ENCODE measurements at regions of chr15 and their contacts with region 1.

Region 1: GRCh38 chr15:64731012-64731806 is 44.2 kb downstream of the RBPMS2 start:
- DNase-seq: peak; percentile 80 to 95 (median 87)
- H3K4me3 ChIP-seq: no peak overlapping the region
- H3K27ac ChIP-seq: no peak overlapping the region
- H3K4me1 ChIP-seq: peaks cover 0 to 7% of the 10 kb centered on the region in 2 donors
- H3K27me3 ChIP-seq: no peaks in the 10 kb centered on the region
- CTCF ChIP-seq: peak; percentile 83 to 98 (median 95)
- POLR2A ChIP-seq: no peak

Region 2: GRCh38 chr15:64681424-64682024 is 49.7 kb before region 1 on chr15:
- intact Hi-C with region 1: loop called (anchors 2 to 5 kb)
- DNase-seq: peak; percentile 50 to 80 (median 65)
- H3K4me3 ChIP-seq: no peak overlapping the region
- H3K27ac ChIP-seq: no peak overlapping the region
- H3K4me1 ChIP-seq: no peaks in the 10 kb centered on the region
- H3K27me3 ChIP-seq: no peaks in the 10 kb centered on the region
- CTCF ChIP-seq: peak; percentile 60 to 96 (median 86)
- POLR2A ChIP-seq: no peak

Region 3: DNA sequence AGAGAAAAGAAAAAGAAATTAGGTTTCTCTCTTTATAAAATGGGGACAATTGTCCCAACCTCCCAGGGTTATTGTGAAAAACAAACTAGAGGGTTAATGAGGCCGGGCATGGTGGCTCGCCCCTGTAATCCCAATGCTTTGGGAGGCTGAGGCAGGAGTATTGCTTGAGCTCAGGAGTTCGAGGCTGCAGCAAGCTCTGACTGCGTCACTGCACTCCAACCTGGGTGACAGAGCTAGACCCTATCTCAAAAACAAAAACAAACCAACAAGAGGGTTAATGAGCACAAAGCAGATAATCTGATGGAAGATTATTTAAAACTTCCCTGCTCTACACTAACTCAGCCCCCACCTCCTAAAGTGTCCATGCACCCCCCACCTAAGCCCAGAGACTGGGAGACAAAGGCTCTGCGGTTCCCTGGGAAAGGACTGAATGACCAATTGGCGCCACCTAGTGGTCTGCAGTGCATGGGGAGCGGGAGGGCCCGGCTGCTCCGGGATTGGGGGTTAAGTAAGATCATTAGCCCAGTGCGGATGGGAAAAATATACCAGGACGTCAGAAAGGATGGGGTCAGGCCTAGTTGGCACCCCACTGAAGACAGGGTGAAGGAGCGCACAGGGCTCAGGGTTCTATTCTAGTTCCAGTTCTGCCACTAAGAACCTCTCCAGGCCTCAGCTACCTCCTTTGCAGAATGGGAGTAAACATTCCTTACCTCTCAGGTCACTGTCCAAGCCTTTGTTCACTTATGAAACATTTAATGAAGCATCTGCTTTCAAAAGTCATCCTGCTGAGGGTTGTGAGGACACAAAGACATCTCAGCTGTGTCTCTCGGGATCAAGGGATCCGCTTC is 78.7 kb after region 1 on chr15:
- intact Hi-C with region 1: loop called (anchors 2 to 5 kb)
- DNase-seq: peak; percentile 75 to 90 (median 83)
- H3K4me3 ChIP-seq: no peak overlapping the region
- H3K27ac ChIP-seq: no peak overlapping the region
- H3K4me1 ChIP-seq: peaks cover 4 to 6% of the 10 kb centered on the region in 2 donors
- H3K27me3 ChIP-seq: no peaks in the 10 kb centered on the region
- CTCF ChIP-seq: peak; percentile 79 to 93 (median 90)
- POLR2A ChIP-seq: no peak

Region 4: GRCh38 chr15:64841258-64842095 is 110.3 kb after region 1 on chr15 and contains the start of gene PLEKHO2:
- intact Hi-C with region 1: no loop called
- DNase-seq: peak; percentile 97 to 99 (median 97)
- H3K4me3 ChIP-seq: peak within 1 kb of the TSS; percentile 62 to 97 (median 92)
- H3K27ac ChIP-seq: peak within 1 kb of the TSS; percentile 88 to 97 (median 96)
- H3K4me1 ChIP-seq: peaks cover 39 to 44% of the 10 kb centered on the region in 2 donors
- H3K27me3 ChIP-seq: no peaks in the 10 kb centered on the region
- CTCF ChIP-seq: peak in 3 of 6 experiments; percentile 19 to 39 (median 25)
- POLR2A ChIP-seq: peak; percentile 79 to 83
- total RNA-seq, gene PLEKHO2: 11.7 to 62.9 (median 49.5) TPM

Region 5: DNA sequence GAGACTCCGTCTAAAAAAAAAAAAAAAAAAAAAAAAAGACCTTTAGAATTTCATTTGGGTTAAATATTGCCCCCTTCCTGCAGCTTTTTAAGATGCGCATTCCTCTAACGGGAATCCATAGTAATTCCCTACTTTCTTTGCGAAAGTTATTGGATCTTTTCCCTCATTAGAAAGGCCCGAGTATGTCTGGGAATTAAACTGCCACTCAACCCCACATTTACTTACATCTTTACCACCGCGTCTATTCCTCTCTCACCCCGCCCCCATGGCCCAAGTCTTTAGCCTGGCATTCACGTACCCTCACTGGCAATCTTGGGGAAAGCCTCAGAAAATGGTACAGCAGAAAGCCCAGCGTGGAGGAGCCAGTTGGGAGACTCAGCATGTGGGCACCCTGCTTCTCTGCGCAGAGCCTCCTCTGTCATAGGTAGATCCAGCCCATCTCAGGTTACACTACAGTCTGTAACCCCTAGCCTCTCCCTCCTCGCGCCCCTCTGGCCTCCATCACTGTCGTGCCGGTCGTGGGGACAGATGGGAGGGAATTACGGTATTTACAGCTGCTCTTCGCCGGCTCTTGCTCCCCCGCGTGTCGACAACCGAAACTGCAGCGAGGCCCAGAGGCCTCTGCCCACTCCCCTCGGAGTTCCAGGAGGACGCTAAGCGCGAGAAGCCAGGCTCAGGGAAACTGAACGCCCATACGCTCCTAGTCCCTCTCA is 174.1 kb after region 1 on chr15:
- intact Hi-C with region 1: loop called (anchors 5 to 10 kb)
- DNase-seq: peak; percentile 76 to 90 (median 80)
- H3K4me3 ChIP-seq: peak overlapping the region in 1 of 4 donors; percentile 28
- H3K27ac ChIP-seq: peak overlapping the region in 1 of 5 donors; percentile 13
- H3K4me1 ChIP-seq: peaks cover 0 to 9% of the 10 kb centered on the region in 2 donors
- H3K27me3 ChIP-seq: no peaks in the 10 kb centered on the region
- CTCF ChIP-seq: peak; percentile 70 to 88 (median 82)
- POLR2A ChIP-seq: no peak

Region 6: GRCh38 chr15:64911311-64912191 is 180.3 kb after region 1 on chr15 and contains the start of gene ANKDD1A:
- intact Hi-C with region 1: loop called (anchors 5 to 10 kb)
- DNase-seq: peak; percentile 78 to 89 (median 87)
- H3K4me3 ChIP-seq: peak within 1 kb of the TSS in 3 of 4 donors; percentile 23 to 83 (median 34)
- H3K27ac ChIP-seq: peak within 1 kb of the TSS in 3 of 5 donors; percentile 45 to 86 (median 74)
- H3K4me1 ChIP-seq: peaks cover 0 to 30% of the 10 kb centered on the region in 2 donors
- H3K27me3 ChIP-seq: no peaks in the 10 kb centered on the region
- CTCF ChIP-seq: no peak
- POLR2A ChIP-seq: peak; percentile 25 to 64
- total RNA-seq, gene ANKDD1A: 7.0 to 41.7 (median 31.2) TPM

Measured in adrenal gland (tissue), 19 donors.